ENCODE measurements at regions of chr17 and their contacts with region 1.

Region 1: DNA sequence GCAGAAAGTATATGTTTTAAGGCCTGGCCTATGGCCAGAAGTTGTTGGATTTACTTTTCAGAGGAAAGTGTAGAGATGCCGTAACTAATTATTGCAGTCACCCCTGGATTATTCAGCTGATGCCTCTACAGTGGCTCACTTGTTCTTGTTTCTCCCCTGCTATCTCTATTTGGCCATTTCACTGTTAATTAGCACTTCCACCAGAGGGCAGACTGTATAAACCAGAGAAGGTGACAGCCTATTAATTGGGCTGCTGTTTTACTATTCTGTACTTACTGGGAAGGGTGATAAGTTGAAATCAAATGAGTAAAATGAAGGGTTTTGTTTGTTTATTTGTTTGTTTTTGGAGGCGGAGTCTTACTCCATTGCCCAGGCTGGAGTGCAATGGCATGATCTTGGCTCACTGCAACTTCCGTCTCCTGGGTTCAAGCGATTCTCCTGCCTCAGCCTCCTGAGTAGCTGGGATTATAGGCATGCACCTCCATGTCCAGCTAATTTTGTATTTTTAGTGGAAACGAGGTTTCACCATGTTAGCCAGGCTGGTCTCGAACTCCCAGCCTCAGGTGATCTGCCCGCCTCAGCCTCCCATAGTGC is 66.0 kb downstream of the CDK12 start:
- DNase-seq: no peak
- ATAC-seq: peak in 2 of 8 donors; percentile 51 to 61
- H3K4me3 ChIP-seq: no peak overlapping the region
- H3K27ac ChIP-seq: no peak overlapping the region
- H3K4me1 ChIP-seq: peaks cover 0 to 27% (median 5%) of the 10 kb centered on the region in 9 donors
- H3K27me3 ChIP-seq: no peaks in the 10 kb centered on the region
- CTCF ChIP-seq: peak in 7 of 9 donors; percentile 39 to 61 (median 50)

Region 2: DNA sequence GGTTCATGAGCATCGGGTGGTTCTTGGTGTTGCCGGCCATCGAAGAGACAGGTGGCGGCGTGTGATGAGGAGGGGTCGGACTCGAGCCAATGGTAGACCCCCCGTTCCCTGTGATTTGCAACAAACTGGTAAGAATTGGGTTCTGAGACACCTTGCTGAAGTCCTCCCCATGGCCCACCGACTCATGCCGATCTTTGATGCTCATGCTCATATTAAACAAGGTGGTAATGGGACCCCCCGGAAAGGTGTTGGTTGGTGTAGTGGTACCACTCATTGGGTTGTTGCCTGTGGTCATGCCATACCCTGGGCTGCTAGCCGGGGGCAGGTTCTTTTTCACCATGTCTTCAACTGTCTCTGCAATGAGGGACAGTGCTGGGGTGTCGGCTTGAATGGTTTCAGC is 117.0 kb before region 1 on chr17:
- intact Hi-C with region 1: loop called in 1 of 10 experiments (anchors 10 kb)
- DNase-seq: no peak
- ATAC-seq: no peak
- H3K4me3 ChIP-seq: no peak overlapping the region
- H3K27ac ChIP-seq: no peak overlapping the region
- H3K4me1 ChIP-seq: peaks cover 0 to 14% (median 5%) of the 10 kb centered on the region in 9 donors
- H3K27me3 ChIP-seq: no peaks in the 10 kb centered on the region
- CTCF ChIP-seq: no peak

Measured in heart right ventricle (tissue), 16 donors.